Ascending aorta (tissue), 2 donors: ENCODE measurements at regions of chr16 and their contacts with region 1.

Region 1: GRCh38 chr16:28211712-28212534 is at the start of gene XPO6:
- DNase-seq: peak; percentile 66 to 97
- H3K4me3 ChIP-seq: peak within 1 kb of the TSS; percentile 92 to 96
- H3K27ac ChIP-seq: peak within 1 kb of the TSS; percentile 86 to 94
- H3K4me1 ChIP-seq: peaks cover 0 to 11% of the 10 kb centered on the region in 2 donors
- H3K27me3 ChIP-seq: no peaks in the 10 kb centered on the region
- CTCF ChIP-seq: peak in 1 of 3 experiments; percentile 12
- total RNA-seq, gene XPO6: 180 TPM

Region 2: GRCh38 chr16:28130099-28131088 is 81.5 kb before region 1 on chr16:
- intact Hi-C with region 1: loop called (anchors 5 kb)
- DNase-seq: no peak
- H3K4me3 ChIP-seq: no peak overlapping the region
- H3K27ac ChIP-seq: peak overlapping the region; percentile 75 to 84
- H3K4me1 ChIP-seq: peaks cover 0 to 14% of the 10 kb centered on the region in 2 donors
- H3K27me3 ChIP-seq: no peaks in the 10 kb centered on the region
- CTCF ChIP-seq: no peak